A673 (cell line): ENCODE measurements at regions of chr14 and their contacts with region 1.

Region 1: DNA sequence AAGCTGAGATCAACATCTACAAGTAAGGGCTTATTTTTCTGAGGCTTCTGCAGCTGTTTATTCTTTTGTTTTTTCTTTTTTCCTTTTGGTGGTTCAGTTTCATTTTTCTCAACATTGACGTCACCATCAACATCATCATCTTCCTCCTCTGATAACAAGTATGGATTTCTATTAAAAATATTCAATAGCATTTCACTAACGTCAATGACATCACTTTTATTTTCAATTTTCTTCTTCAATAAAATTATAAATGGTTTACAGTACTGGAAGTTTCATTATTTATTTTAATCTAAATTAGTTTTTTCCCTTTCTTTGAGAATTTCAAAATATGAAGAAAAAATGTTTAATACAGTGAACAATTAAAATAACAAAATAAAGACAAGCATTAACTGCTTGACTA is 23.9 kb downstream of the NEMF start:
- DNase-seq: no peak
- H3K4me3 ChIP-seq: no peak overlapping the region
- H3K27ac ChIP-seq: no peak overlapping the region
- H3K4me1 ChIP-seq: no peaks in the 10 kb centered on the region
- H3K27me3 ChIP-seq: no peaks in the 10 kb centered on the region
- CTCF ChIP-seq: no peak

Region 2: GRCh38 chr14:49796025-49796424 is 32.6 kb before region 1 on chr14:
- CTCF ChIA-PET with region 1: no interaction called
- POLR2A ChIA-PET with region 1: no interaction called
- intact Hi-C with region 1: loop called (anchors 5 kb)
- DNase-seq: no peak
- H3K4me3 ChIP-seq: no peak overlapping the region
- H3K27ac ChIP-seq: no peak overlapping the region
- H3K4me1 ChIP-seq: no peaks in the 10 kb centered on the region
- H3K27me3 ChIP-seq: no peaks in the 10 kb centered on the region
- CTCF ChIP-seq: no peak

Region 3: GRCh38 chr14:49808780-49809179 is 19.9 kb before region 1 on chr14:
- CTCF ChIA-PET with region 1: no interaction called
- POLR2A ChIA-PET with region 1: no interaction called
- intact Hi-C with region 1: no loop called
- DNase-seq: no peak
- H3K4me3 ChIP-seq: no peak overlapping the region
- H3K27ac ChIP-seq: no peak overlapping the region
- H3K4me1 ChIP-seq: no peaks in the 10 kb centered on the region
- H3K27me3 ChIP-seq: no peaks in the 10 kb centered on the region
- CTCF ChIP-seq: no peak